AG04450 (cell line): ENCODE measurements at regions of chr11 and their contacts with region 1.

Region 1: DNA sequence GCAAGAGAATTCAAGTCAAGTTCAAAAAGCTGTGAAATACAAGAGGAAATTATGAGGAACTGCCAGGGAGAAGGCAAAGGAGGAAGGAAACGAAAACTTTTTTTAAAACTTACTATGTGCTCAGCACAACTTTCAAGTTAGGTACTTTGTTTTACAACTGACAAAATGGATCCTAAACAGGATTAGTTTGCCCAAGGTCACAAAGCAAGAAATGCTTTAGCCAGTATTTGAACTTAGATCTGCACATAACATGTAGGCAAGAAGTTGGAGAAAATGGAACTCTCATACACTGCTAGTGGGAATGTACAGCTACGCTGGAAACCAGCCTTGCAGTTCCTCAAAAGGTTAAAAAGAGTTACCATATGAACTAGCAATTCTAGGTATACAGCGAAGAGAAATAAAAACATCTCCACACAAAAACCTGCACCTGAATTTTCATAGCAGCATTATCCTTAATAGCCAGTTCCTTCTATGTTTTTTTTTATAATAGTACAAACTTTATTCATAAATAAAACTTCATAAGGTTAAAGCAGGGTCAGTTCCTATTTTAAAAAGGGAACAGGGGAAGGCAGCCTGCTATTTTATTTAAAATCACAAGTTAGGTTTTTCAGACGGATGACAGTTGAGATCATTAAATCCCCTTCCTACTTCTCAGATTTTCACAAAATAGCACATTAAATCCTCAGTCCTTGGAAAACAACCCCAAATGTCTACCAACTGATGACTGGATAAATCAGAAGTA is 19.2 kb downstream of the DDX6 start:
- DNase-seq: no peak
- H3K4me3 ChIP-seq: no peak overlapping the region
- H3K27ac ChIP-seq: no peak overlapping the region
- H3K27me3 ChIP-seq: no peaks in the 10 kb centered on the region
- CTCF ChIP-seq: no peak

Region 2: GRCh38 chr11:118592616-118593367 is 178.9 kb before region 1 on chr11:
- CTCF ChIA-PET with region 1: no interaction called
- POLR2A ChIA-PET with region 1: no interaction called
- DNase-seq: no peak
- H3K4me3 ChIP-seq: no peak overlapping the region
- H3K27ac ChIP-seq: no peak overlapping the region
- H3K27me3 ChIP-seq: no peaks in the 10 kb centered on the region
- CTCF ChIP-seq: no peak

Region 3: DNA sequence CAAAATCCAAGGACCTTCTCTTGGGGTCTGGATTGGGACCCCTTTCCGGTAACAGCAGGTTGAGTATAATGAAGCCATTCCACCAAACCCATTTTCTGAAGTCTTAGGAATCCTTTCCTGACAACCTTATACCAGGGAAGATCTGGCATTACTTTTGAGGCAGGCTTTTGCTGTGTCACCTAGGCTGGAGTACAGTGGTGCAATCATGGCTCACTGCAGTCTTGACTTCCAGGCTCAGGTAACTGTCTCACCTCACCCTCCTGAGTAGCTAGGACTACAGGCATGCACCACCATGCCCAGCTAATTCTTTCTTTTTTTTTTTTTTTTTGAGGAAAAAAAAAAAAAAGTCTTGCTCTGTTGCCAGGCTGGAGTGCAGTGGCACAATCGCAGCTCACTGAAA is 36.5 kb before region 1 on chr11:
- CTCF ChIA-PET with region 1: no interaction called
- POLR2A ChIA-PET with region 1: interaction called, 11 read pairs
- DNase-seq: no peak
- H3K4me3 ChIP-seq: no peak overlapping the region
- H3K27ac ChIP-seq: no peak overlapping the region
- H3K27me3 ChIP-seq: peaks cover 7% of the 10 kb centered on the region
- CTCF ChIP-seq: no peak

Region 4: DNA sequence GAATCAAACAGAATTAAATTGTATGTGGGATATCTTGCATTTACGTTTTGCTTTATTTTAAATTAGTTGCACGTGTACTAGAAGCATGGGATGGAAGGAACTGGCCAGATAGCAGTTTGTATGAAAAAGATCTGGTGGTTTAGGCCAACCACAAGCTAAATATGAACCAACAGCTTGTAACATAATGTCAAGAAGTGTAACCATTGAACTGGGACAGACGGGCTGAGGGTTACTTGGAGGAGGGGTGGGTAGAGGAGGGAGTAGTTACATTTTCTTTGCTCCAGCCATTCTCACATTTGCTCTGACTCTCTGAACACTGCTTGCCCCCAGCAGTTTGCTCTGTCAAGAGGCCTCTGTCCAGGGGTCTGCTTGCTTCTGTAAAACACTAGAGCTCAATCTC is 80.3 kb after region 1 on chr11:
- CTCF ChIA-PET with region 1: no interaction called
- POLR2A ChIA-PET with region 1: no interaction called
- DNase-seq: no peak
- H3K4me3 ChIP-seq: no peak overlapping the region
- H3K27ac ChIP-seq: no peak overlapping the region
- H3K27me3 ChIP-seq: no peaks in the 10 kb centered on the region
- CTCF ChIP-seq: no peak